Left cardiac atrium (tissue), 4 donors: ENCODE measurements at regions of chr12 and their contacts with region 1.

Region 1: GRCh38 chr12:79935021-79935623 is at the start of gene PPP1R12A:
- DNase-seq: peak; percentile 98
- ATAC-seq: peak; percentile 97 to 98
- total RNA-seq, gene PPP1R12A: 55.4 to 61.9 TPM

Region 2: DNA sequence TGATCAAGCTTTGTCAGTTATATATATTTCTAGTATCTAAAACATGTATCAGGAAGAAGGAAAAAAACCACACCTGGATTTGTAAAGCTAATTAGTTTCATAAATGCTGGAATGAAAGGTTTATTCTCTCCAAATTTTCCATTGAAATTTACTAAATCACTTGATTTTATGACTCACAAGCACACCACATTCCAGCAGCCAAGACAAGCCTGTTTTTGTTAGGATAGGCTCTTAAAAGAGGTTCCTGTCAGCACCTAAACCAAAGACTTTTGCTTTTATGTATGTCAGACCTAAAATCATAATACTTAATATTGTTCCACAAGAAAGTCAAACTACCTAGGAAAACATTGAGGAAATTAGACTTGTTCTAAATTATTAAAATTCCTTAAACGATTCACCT is 159.0 kb before region 1 on chr12:
- intact Hi-C with region 1: loop called in 1 of 2 experiments (anchors 10 kb)
- DNase-seq: no peak
- ATAC-seq: peak; percentile 34 to 86

Region 3: GRCh38 chr12:79818856-79819255 is 116.3 kb before region 1 on chr12:
- intact Hi-C with region 1: loop called in 1 of 2 experiments (anchors 5 kb)
- DNase-seq: no peak
- ATAC-seq: peak; percentile 55 to 65

Region 4: DNA sequence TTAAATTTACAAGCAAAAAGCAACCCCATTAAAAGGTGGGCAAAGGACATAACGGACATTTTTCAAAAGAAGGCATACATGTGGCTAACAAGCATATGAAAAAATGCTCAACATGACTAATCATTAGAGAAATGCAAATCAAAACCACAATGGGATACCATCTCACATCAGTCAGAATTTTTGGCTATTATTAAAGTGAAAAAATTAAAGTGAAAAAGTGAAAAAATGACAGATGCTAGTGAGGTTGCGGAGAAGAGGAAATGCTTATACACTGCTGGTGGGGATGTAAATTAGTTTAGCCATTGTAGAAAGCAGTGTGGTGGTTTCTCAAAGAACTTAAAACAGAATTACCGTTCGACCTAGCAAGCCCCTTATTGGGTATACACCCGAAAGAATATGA is 172.1 kb after region 1 on chr12:
- intact Hi-C with region 1: no loop called
- DNase-seq: no peak
- ATAC-seq: no peak

Region 5: DNA sequence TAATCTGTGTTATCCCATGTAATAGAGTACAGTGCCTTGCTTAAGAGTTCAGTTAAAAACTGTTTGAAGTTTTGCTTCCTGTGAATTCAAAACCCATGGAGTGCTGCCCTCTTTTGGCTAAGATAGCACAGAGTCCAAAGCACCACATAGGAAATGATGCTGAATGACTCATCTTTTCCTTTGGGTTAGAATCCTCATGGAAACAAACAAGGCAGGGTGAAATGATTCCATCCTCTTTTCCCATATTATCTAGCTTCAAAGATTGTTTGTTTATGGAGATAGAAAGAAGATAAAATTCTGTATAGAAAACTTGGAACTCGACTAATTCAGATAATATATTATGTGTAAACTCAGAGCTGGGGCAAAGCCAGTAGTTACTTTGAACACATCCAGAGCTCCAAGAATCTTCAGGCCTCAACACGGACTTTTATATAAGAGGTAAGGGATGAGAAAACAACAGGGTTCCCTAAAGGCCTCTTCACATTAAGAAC is 251.7 kb after region 1 on chr12:
- intact Hi-C with region 1: loop called in 1 of 2 experiments (anchors 2 kb)
- DNase-seq: peak; percentile 32
- ATAC-seq: peak; percentile 87 to 90